Activated CD4-positive, alpha-beta T cell treated with anti-CD3 and anti-CD28 coated beads, Interleukin-2, amount 10 ng/mL, durations not matched to agents 24 days and 14 days (primary cell): ENCODE measurements at regions of chrX and their contacts with region 1.

Region 1: GRCh38 chrX:115330498-115331168 is 41.1 kb downstream of the LUZP4 start:
- DNase-seq: peak; percentile 63
- H3K4me3 Mint-ChIP-seq: no peak overlapping the region
- H3K27ac Mint-ChIP-seq: no peak overlapping the region
- H3K4me1 Mint-ChIP-seq: no peaks in the 10 kb centered on the region
- H3K27me3 Mint-ChIP-seq: no peaks in the 10 kb centered on the region

Region 2: DNA sequence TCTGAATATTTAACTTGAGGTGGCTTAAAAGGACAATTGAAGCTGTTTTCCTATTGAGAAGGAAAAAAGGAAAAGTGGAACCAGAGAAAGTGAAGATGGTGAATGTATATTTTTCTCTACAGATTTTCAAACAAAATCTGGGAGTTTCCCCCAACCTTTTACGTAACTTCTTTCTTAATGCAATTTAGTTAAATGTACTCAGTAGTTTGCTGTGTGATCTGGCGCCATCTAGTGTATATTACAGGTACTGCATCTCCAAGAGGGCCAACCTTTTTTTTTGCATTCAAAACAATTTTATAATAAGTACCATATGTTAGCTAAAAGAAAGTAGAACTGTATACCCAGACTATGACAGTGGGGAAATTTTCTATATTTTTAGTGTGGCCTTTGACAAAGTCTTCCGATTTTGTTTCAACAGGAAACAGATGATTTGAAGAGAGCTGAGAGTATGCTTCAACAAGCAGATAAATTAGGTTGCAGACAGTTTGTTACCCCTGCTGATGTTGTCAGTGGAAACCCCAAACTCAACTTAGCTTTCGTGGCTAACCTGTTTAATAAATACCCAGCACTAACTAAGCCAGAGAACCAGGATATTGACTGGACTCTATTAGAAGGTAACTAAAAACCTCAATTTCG is 312.4 kb after region 1 on chrX:
- intact Hi-C with region 1: loop called (anchors 1 kb)
- DNase-seq: peak; percentile 73
- H3K4me3 Mint-ChIP-seq: no peak overlapping the region
- H3K27ac Mint-ChIP-seq: no peak overlapping the region
- H3K4me1 Mint-ChIP-seq: no peaks in the 10 kb centered on the region
- H3K27me3 Mint-ChIP-seq: no peaks in the 10 kb centered on the region

Region 3: DNA sequence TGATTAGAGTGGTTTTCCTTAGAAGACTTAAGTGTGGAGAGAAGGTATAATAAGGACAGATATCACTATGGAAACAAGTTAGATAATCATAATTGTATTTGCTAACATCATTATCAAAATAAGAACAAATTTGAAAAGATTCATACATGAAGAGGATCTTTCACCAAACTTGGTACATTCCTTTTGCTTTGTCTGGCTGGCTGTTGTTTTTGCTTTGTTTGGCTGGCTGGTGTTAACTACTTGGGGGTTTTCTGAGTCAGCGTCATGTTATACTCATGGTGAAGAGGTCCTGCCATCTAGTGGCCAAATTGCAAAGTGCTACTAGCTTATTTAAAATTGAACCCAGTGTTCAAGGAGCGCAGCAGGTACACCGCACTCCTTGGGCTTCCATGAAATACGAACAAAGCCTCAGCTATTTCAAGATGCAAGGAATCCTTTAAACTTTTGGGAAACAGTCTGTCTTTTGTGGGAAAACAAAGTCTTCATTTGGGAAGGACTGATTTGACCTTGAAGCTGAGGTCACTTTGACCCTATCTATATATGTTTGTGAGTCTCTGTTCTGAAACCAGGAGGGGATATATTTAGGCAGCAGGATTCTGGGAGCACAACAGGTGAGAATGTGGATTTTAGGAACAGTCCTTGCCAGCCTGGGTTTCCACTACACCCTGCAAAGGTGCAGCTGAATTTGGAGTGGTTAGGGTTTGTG is 360.0 kb after region 1 on chrX:
- intact Hi-C with region 1: loop called (anchors 2 kb)
- DNase-seq: peak; percentile 74
- H3K4me3 Mint-ChIP-seq: no peak overlapping the region
- H3K27ac Mint-ChIP-seq: no peak overlapping the region
- H3K4me1 Mint-ChIP-seq: no peaks in the 10 kb centered on the region
- H3K27me3 Mint-ChIP-seq: no peaks in the 10 kb centered on the region